ENCODE measurements at regions of chr4 and their contacts with region 1.

Region 1: GRCh38 chr4:138035781-138036258 is 206.3 kb downstream of the SLC7A11 start:
- DNase-seq: peak in 2 of 5 donors; percentile 62 to 68
- H3K4me3 ChIP-seq: no peak overlapping the region
- H3K27ac ChIP-seq: no peak overlapping the region
- H3K4me1 ChIP-seq: no peaks in the 10 kb centered on the region
- H3K27me3 ChIP-seq: no peaks in the 10 kb centered on the region
- CTCF ChIP-seq: peak; percentile 55

Region 2: GRCh38 chr4:137812258-137812657 is 223.6 kb before region 1 on chr4:
- intact Hi-C with region 1: no loop called
- DNase-seq: no peak
- H3K4me3 ChIP-seq: no peak overlapping the region
- H3K27ac ChIP-seq: no peak overlapping the region
- H3K4me1 ChIP-seq: no peaks in the 10 kb centered on the region
- H3K27me3 ChIP-seq: no peaks in the 10 kb centered on the region
- CTCF ChIP-seq: no peak

Region 3: GRCh38 chr4:137909529-137910309 is 126.1 kb before region 1 on chr4:
- intact Hi-C with region 1: no loop called
- DNase-seq: peak in 3 of 5 donors; percentile 4 to 32 (median 18)
- H3K4me3 ChIP-seq: no peak overlapping the region
- H3K27ac ChIP-seq: no peak overlapping the region
- H3K4me1 ChIP-seq: no peaks in the 10 kb centered on the region
- H3K27me3 ChIP-seq: no peaks in the 10 kb centered on the region
- CTCF ChIP-seq: no peak

Region 4: DNA sequence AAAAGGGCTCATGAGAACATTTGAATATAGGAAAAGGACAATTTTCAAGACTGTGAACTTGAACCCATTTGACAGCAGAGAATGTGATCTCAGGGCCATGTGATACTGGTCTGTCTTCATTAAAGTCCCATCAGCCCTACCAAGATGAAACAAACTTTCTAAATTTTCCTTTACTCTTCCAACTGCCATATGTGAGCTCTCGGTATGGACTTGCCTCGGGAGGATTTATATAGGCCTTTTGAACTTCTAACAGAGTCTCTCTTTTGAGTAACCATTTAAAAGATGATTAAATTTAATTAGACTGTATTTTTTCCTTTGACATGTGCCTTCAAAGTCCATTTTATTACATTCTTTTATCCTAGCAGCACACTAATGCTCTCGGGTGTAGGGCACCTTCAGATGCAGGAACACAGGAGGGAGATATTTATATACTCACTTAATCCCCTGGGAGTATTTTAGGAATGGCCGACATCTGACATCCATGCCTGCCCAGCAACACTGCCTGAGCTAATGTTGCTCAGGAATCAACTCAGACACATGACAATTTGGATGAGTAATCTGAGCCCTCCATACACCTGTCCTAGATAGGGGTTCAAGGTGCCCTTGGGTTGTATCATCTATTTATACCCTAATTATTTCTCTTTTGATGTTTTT is 51.4 kb after region 1 on chr4:
- intact Hi-C with region 1: no loop called
- DNase-seq: peak in 2 of 5 donors; percentile 54 to 75
- H3K4me3 ChIP-seq: no peak overlapping the region
- H3K27ac ChIP-seq: no peak overlapping the region
- H3K4me1 ChIP-seq: peaks cover 0 to 2% (median 0%) of the 10 kb centered on the region in 3 donors
- H3K27me3 ChIP-seq: no peaks in the 10 kb centered on the region
- CTCF ChIP-seq: no peak

Region 5: DNA sequence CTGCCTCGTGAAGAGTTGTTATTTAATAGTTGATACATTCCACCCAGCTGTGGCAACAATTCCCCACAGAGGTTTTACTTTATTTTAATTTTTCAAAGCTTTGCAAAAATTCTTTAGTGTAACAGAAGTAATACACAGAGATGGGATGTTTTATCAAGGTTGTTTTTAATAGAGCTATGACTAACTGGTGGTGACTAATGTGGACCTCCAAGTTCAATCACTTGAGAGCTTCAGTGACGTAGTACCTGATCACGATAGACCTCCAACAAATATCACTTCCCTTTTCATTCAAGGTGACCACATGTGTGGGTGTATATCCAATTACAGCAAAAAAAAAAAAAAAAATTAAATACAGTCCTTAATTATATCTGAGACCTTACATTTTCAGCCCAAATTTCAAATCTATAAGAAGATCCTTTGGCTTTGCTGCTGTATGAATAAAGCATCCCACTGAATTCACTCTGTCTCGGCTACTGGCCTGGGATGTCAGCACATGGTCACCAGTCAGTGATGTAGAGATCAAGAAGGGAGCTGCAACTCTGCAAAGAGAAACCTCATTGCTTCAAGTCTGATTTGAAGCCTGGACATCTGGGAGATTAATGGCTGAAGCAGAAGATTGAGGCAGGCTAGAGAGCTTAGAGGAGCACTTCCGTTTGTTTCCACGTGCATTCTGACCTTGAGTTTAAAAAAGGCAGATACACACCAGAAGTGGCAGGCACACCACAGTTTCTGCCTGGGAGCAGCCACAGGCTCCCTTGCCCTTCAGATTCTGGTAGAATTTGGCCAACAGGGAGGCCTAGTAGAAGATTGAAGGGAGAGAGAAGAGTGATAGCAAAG is 633.9 kb after region 1 on chr4:
- intact Hi-C with region 1: loop called (anchors 10 kb)
- DNase-seq: no peak
- H3K4me3 ChIP-seq: no peak overlapping the region
- H3K27ac ChIP-seq: no peak overlapping the region
- H3K4me1 ChIP-seq: peaks cover 0 to 17% (median 17%) of the 10 kb centered on the region in 3 donors
- H3K27me3 ChIP-seq: no peaks in the 10 kb centered on the region
- CTCF ChIP-seq: no peak

Measured in kidney (tissue), 22 donors.